Activated B cell treated with CpG ODN at 0.5 μM for 24 hours (primary cell): ENCODE measurements at regions of chrX and their contacts with region 1.

Region 1: DNA sequence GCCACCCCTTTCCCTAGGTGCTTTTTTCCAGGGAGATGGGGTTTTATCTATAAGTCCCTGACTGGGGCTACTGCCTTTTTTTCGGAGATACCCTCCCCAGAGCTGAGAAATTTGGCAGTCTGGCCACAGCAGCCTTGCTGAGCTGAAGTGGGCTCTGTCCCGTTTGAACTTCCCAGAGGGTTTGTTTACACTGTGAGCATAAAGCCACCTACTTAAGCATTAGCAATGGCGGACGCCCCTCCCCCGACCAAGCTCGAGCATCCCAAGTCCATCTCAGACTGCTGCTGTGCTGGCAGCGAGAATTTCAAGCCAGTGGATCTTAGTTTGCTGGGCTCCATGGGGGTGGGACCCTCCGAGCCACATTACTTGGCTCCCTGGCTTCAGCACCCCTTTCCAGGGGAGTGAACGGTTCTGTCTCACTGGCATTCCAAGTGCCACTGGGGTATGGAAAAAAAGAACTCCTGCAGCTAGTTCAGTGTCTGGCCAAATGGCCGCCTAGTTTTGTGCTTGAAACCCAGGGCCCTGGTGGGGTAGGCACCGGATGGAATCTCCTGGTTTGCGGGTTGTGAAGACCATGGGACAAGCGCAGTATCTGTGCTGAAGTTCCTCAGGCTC is 456.4 kb upstream of the HTR2C start:
- DNase-seq: no peak
- ATAC-seq: no peak
- H3K4me3 Mint-ChIP-seq: no peak overlapping the region
- H3K27ac Mint-ChIP-seq: no peak overlapping the region
- H3K4me1 Mint-ChIP-seq: no peaks in the 10 kb centered on the region
- H3K27me3 Mint-ChIP-seq: no peaks in the 10 kb centered on the region
- CTCF ChIP-seq: no peak

Region 2: GRCh38 chrX:114065577-114066223 is 61.8 kb before region 1 on chrX:
- CTCF ChIA-PET with region 1: no interaction called
- POLR2A ChIA-PET with region 1: no interaction called
- intact Hi-C with region 1: loop called (anchors 10 kb)
- DNase-seq: no peak
- ATAC-seq: no peak
- H3K4me3 Mint-ChIP-seq: no peak overlapping the region
- H3K27ac Mint-ChIP-seq: no peak overlapping the region
- H3K4me1 Mint-ChIP-seq: no peaks in the 10 kb centered on the region
- H3K27me3 Mint-ChIP-seq: no peaks in the 10 kb centered on the region
- CTCF ChIP-seq: no peak

Region 3: GRCh38 chrX:114097866-114098265 is 29.7 kb before region 1 on chrX:
- CTCF ChIA-PET with region 1: no interaction called
- POLR2A ChIA-PET with region 1: no interaction called
- intact Hi-C with region 1: no loop called
- DNase-seq: no peak
- ATAC-seq: no peak
- H3K4me3 Mint-ChIP-seq: no peak overlapping the region
- H3K27ac Mint-ChIP-seq: no peak overlapping the region
- H3K4me1 Mint-ChIP-seq: peaks cover 3% of the 10 kb centered on the region
- H3K27me3 Mint-ChIP-seq: no peaks in the 10 kb centered on the region
- CTCF ChIP-seq: no peak

Region 4: DNA sequence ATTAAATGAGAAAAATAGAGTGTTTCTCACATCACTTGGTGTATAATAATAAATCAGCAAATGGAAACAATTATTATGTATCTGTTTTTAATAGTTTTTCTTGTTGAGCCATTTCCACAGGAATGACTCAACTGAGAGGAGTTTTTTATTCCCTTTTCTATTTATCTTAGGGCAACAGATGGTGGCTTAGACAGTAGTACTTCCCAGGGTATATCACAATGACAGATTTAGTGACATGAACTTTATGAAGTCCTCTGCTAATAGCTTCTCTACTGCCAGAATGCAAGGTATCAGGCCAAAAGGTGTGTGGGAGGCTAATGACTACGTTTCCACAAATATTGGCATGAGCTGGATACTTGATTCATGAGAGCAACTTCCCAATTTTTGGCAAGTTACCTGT is 583.1 kb after region 1 on chrX:
- CTCF ChIA-PET with region 1: no interaction called
- POLR2A ChIA-PET with region 1: no interaction called
- intact Hi-C with region 1: no loop called
- DNase-seq: no peak
- ATAC-seq: no peak
- H3K4me3 Mint-ChIP-seq: no peak overlapping the region
- H3K27ac Mint-ChIP-seq: no peak overlapping the region
- H3K4me1 Mint-ChIP-seq: no peaks in the 10 kb centered on the region
- H3K27me3 Mint-ChIP-seq: no peaks in the 10 kb centered on the region
- CTCF ChIP-seq: no peak